ENCODE measurements at regions of chr15 and their contacts with region 1.

Region 1: DNA sequence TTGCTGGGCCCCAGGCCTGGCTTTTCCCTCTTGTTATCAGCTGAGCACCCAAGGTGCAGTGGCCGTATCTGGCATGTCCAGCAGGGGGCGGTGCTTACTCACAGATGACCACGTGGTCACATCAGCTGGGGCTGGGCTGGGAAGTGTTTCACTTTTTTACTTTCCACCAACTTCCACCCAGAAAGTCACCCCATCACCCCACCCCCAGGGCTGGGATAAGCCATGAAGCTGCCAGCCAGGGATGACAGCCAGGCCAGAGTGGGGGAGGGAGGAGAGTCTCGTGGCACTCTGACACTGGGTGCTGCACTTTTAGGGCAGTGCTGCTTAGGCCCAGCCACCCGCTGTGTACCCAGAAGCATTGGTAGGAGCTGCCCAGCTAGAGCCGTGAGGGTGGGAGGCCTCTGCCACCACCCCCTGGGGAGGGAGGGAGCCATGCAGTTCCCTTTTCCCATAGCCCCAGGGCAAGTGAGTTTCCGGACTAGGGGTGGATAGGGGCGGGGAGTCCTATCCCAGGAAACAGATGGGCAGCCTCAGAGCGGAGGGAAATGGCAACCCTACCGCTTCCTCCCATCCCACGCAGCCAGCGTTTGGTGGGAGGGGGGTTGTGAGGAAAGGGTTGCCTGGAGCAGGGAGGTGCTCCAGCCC is 6.1 kb downstream of the PPCDC start:
- DNase-seq: peak; percentile 91
- ATAC-seq: peak; percentile 85
- H3K4me3 Mint-ChIP-seq: no peak overlapping the region
- H3K27ac Mint-ChIP-seq: peak overlapping the region; percentile 75
- H3K4me1 Mint-ChIP-seq: peaks cover 48% of the 10 kb centered on the region
- H3K27me3 Mint-ChIP-seq: no peaks in the 10 kb centered on the region

Region 2: GRCh38 chr15:75208501-75209288 is 179.2 kb after region 1 on chr15:
- CTCF ChIA-PET with region 1: interaction called, 94 read pairs
- POLR2A ChIA-PET with region 1: interaction called, 23 read pairs
- DNase-seq: no peak
- ATAC-seq: no peak
- H3K4me3 Mint-ChIP-seq: no peak overlapping the region
- H3K27ac Mint-ChIP-seq: peak overlapping the region; percentile 65
- H3K4me1 Mint-ChIP-seq: peaks cover 54% of the 10 kb centered on the region
- H3K27me3 Mint-ChIP-seq: no peaks in the 10 kb centered on the region

Measured in activated CD8-positive, alpha-beta T cell treated with anti-CD3 and anti-CD28 coated beads, Interleukin-2, amount 10 ng/mL, durations not matched to agents 7 days and 5 days (primary cell).